ENCODE measurements at regions of chr14 and their contacts with region 1.

Region 1: GRCh38 chr14:53539489-53540126 is 386.5 kb upstream of the DDHD1 start:
- DNase-seq: peak; percentile 78
- H3K4me3 ChIP-seq: no peak overlapping the region
- H3K27ac ChIP-seq: no peak overlapping the region
- H3K4me1 ChIP-seq: peaks cover 8% of the 10 kb centered on the region
- H3K27me3 ChIP-seq: no peaks in the 10 kb centered on the region
- CTCF ChIP-seq: peak; percentile 93

Region 2: DNA sequence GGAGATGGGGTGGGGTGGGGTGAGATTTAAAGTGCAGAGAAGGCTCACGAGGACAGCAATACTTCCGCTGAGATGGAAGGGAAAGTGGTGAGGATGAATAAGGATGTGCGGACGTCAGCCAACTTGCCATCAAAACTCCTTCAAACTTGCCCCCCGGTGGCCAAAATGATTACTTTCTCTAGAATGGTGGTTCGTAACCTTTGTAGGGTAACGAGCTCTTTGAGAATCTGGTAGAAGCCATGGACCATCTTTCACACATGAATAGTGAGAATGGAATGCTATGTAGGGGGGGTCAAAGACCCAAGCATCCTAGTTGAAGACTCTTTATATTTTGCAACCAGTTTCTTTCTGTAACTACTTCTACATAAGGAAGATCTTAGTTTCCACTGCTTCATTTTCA is 140.6 kb before region 1 on chr14:
- CTCF ChIA-PET with region 1: no interaction called
- POLR2A ChIA-PET with region 1: no interaction called
- intact Hi-C with region 1: no loop called
- DNase-seq: peak; percentile 45
- H3K4me3 ChIP-seq: no peak overlapping the region
- H3K27ac ChIP-seq: no peak overlapping the region
- H3K4me1 ChIP-seq: no peaks in the 10 kb centered on the region
- H3K27me3 ChIP-seq: peaks cover 12% of the 10 kb centered on the region
- CTCF ChIP-seq: peak; percentile 42

Region 3: GRCh38 chr14:53778263-53778662 is 238.7 kb after region 1 on chr14:
- CTCF ChIA-PET with region 1: no interaction called
- POLR2A ChIA-PET with region 1: no interaction called
- intact Hi-C with region 1: no loop called
- DNase-seq: no peak
- H3K4me3 ChIP-seq: no peak overlapping the region
- H3K27ac ChIP-seq: no peak overlapping the region
- H3K4me1 ChIP-seq: no peaks in the 10 kb centered on the region
- H3K27me3 ChIP-seq: peaks cover 27% of the 10 kb centered on the region
- CTCF ChIP-seq: no peak

Region 4: GRCh38 chr14:54329082-54329695 is 789.6 kb after region 1 on chr14:
- CTCF ChIA-PET with region 1: interaction called, 4 read pairs
- POLR2A ChIA-PET with region 1: no interaction called
- intact Hi-C with region 1: loop called (anchors 2 kb)
- DNase-seq: peak; percentile 71
- H3K4me3 ChIP-seq: no peak overlapping the region
- H3K27ac ChIP-seq: no peak overlapping the region
- H3K4me1 ChIP-seq: no peaks in the 10 kb centered on the region
- H3K27me3 ChIP-seq: peaks cover 33% of the 10 kb centered on the region
- CTCF ChIP-seq: peak; percentile 83

Measured in A673 (cell line).